HEK293 (cell line): ENCODE measurements at regions of chr2 and their contacts with region 1.

Region 1: GRCh38 chr2:76599732-76600368 is 889.1 kb upstream of the GCFC2 start:
- H3K4me3 ChIP-seq: no peak overlapping the region
- H3K27ac ChIP-seq: no peak overlapping the region
- H3K4me1 ChIP-seq: no peaks in the 10 kb centered on the region
- CTCF ChIP-seq: peak; percentile 47; the same call in 1 of the 2 replicates

Region 2: DNA sequence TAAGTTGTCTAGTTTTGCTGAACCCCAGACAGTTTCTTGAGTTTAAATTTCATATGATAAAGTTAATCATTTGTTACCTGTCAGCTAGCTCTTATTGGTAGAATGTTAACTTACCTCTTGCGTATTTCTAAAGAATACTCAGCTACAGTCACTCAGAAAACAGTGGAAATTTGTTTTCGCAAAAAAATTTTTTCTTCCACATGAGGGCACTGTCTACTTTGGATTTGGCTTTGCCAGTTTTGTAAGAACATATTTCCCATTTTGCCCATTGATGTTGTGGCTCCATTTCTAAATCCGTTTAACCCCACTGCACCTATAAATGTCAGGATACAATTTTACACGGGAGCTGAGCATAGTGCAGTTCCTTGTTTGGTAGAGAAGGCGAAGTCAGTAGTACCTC is 870.0 kb before region 1 on chr2:
- CTCF ChIA-PET with region 1: interaction called, 10 read pairs
- POLR2A ChIA-PET with region 1: no interaction called
- H3K4me3 ChIP-seq: no peak overlapping the region
- H3K27ac ChIP-seq: no peak overlapping the region
- H3K4me1 ChIP-seq: no peaks in the 10 kb centered on the region
- CTCF ChIP-seq: 0 out of 2 replicates have a peak, but pooled peaks have one; percentile 28

Region 3: GRCh38 chr2:76197842-76198448 is 401.9 kb before region 1 on chr2:
- CTCF ChIA-PET with region 1: interaction called, 30 read pairs
- POLR2A ChIA-PET with region 1: no interaction called
- H3K4me3 ChIP-seq: no peak overlapping the region
- H3K27ac ChIP-seq: no peak overlapping the region
- H3K4me1 ChIP-seq: no peaks in the 10 kb centered on the region
- CTCF ChIP-seq: no peak

Region 4: DNA sequence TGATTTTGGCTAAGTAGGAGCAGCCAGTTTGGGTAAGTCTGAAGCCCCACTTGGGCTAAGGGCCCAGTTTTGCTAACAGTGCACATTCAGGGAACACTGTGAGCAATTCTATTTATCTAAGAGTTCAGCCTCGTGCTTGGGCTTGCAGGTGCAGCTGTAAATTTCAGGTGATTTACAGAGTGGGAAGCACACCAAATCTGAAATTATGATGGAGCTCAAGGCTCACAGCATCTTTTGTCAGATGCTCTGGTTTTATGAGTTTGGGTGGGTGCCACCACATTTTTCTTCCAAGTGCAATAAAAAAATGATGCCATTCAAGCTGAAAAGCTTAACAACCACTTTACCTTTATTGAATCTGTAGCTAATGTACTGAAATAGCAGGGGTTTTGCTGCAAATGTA is 251.2 kb after region 1 on chr2:
- CTCF ChIA-PET with region 1: no interaction called
- POLR2A ChIA-PET with region 1: no interaction called
- H3K4me3 ChIP-seq: no peak overlapping the region
- H3K27ac ChIP-seq: no peak overlapping the region
- H3K4me1 ChIP-seq: no peaks in the 10 kb centered on the region
- CTCF ChIP-seq: no peak